ENCODE measurements at regions of chr16 and their contacts with region 1.

Region 1: GRCh38 chr16:8567750-8568617 is 22.3 kb downstream of the TMEM114 start:
- DNase-seq: peak; percentile 88
- ATAC-seq: peak; percentile 92
- H3K4me3 ChIP-seq: no peak overlapping the region
- H3K27ac ChIP-seq: no peak overlapping the region
- H3K4me1 ChIP-seq: peaks cover 1% of the 10 kb centered on the region
- H3K27me3 ChIP-seq: no peaks in the 10 kb centered on the region; the same call in 1 of the 2 replicates
- CTCF ChIP-seq: peak; percentile 99
- POLR2A ChIP-seq: no peak
- RAD21 ChIP-seq: peak; percentile 99

Region 2: GRCh38 chr16:8607214-8607613 is 39.2 kb after region 1 on chr16:
- CTCF ChIA-PET with region 1: no interaction called
- POLR2A ChIA-PET with region 1: no interaction called
- dilution Hi-C with region 1: no loop called
- in situ Hi-C with region 1: no loop called
- intact Hi-C with region 1: no loop called
- DNase-seq: no peak
- ATAC-seq: no peak
- H3K4me3 ChIP-seq: no peak overlapping the region
- H3K27ac ChIP-seq: no peak overlapping the region
- H3K4me1 ChIP-seq: no peaks in the 10 kb centered on the region; the same call in 1 of the 2 replicates
- H3K27me3 ChIP-seq: peaks cover 1% of the 10 kb centered on the region; the same call in 1 of the 2 replicates
- CTCF ChIP-seq: no peak
- POLR2A ChIP-seq: no peak
- RAD21 ChIP-seq: no peak

Region 3: GRCh38 chr16:8621572-8622314 is 53.8 kb after region 1 on chr16 and contains the start of gene METTL22:
- CTCF ChIA-PET with region 1: no interaction called
- POLR2A ChIA-PET with region 1: no interaction called
- dilution Hi-C with region 1: no loop called
- in situ Hi-C with region 1: no loop called
- intact Hi-C with region 1: loop called (anchors 1 kb)
- DNase-seq: peak; percentile 80
- ATAC-seq: peak; percentile 99
- H3K4me3 ChIP-seq: peak within 1 kb of the TSS; percentile 91
- H3K27ac ChIP-seq: peak within 1 kb of the TSS; percentile 92
- H3K4me1 ChIP-seq: no peaks in the 10 kb centered on the region
- H3K27me3 ChIP-seq: peaks cover 2% of the 10 kb centered on the region; the same call in 1 of the 2 replicates
- CTCF ChIP-seq: no peak
- POLR2A ChIP-seq: peak; percentile 80
- RAD21 ChIP-seq: no peak
- total RNA-seq, gene METTL22: 27.2 and 38.3 TPM in 2 replicates

Region 4: GRCh38 chr16:8644211-8645140 is 76.5 kb after region 1 on chr16:
- CTCF ChIA-PET with region 1: no interaction called
- POLR2A ChIA-PET with region 1: no interaction called
- dilution Hi-C with region 1: no loop called
- in situ Hi-C with region 1: loop called (anchors 5 kb)
- intact Hi-C with region 1: no loop called
- DNase-seq: no peak
- ATAC-seq: no peak
- H3K4me3 ChIP-seq: no peak overlapping the region
- H3K27ac ChIP-seq: no peak overlapping the region
- H3K4me1 ChIP-seq: no peaks in the 10 kb centered on the region
- H3K27me3 ChIP-seq: no peaks in the 10 kb centered on the region
- CTCF ChIP-seq: no peak
- POLR2A ChIP-seq: no peak
- RAD21 ChIP-seq: no peak

Region 5: GRCh38 chr16:8797364-8798173 is 229.6 kb after region 1 on chr16 and contains the starts of genes PMM2 and TMEM186:
- CTCF ChIA-PET with region 1: no interaction called
- POLR2A ChIA-PET with region 1: interaction called, 5 read pairs
- dilution Hi-C with region 1: no loop called
- in situ Hi-C with region 1: loop called (anchors 5 kb)
- intact Hi-C with region 1: loop called (anchors 1 kb)
- DNase-seq: peak; percentile 95
- ATAC-seq: peak; percentile 99
- H3K4me3 ChIP-seq: peak within 1 kb of the TSS; percentile 78
- H3K27ac ChIP-seq: peak within 1 kb of the TSS; percentile 93
- H3K4me1 ChIP-seq: peaks cover 7% of the 10 kb centered on the region
- H3K27me3 ChIP-seq: no peaks in the 10 kb centered on the region
- CTCF ChIP-seq: no peak
- POLR2A ChIP-seq: peak; percentile 94
- RAD21 ChIP-seq: no peak
- total RNA-seq, gene PMM2: 25.8 and 36.1 TPM in 2 replicates
- total RNA-seq, gene TMEM186: 5.7 and 5.8 TPM in 2 replicates

Region 6: GRCh38 chr16:9134739-9135138 is 566.8 kb after region 1 on chr16:
- CTCF ChIA-PET with region 1: no interaction called
- POLR2A ChIA-PET with region 1: no interaction called
- dilution Hi-C with region 1: no loop called
- in situ Hi-C with region 1: loop called (anchors 25 kb)
- intact Hi-C with region 1: loop called (anchors 10 kb)
- DNase-seq: peak; percentile 55
- ATAC-seq: peak; percentile 64
- H3K4me3 ChIP-seq: no peak overlapping the region
- H3K27ac ChIP-seq: no peak overlapping the region
- H3K4me1 ChIP-seq: no peaks in the 10 kb centered on the region
- H3K27me3 ChIP-seq: no peaks in the 10 kb centered on the region
- CTCF ChIP-seq: peak; percentile 61
- POLR2A ChIP-seq: no peak
- RAD21 ChIP-seq: peak; percentile 73

Measured in IMR-90 (cell line).